Left ventricle myocardium inferior (tissue), 1 donor: ENCODE measurements at regions of chr18 and their contacts with region 1.

Region 1: DNA sequence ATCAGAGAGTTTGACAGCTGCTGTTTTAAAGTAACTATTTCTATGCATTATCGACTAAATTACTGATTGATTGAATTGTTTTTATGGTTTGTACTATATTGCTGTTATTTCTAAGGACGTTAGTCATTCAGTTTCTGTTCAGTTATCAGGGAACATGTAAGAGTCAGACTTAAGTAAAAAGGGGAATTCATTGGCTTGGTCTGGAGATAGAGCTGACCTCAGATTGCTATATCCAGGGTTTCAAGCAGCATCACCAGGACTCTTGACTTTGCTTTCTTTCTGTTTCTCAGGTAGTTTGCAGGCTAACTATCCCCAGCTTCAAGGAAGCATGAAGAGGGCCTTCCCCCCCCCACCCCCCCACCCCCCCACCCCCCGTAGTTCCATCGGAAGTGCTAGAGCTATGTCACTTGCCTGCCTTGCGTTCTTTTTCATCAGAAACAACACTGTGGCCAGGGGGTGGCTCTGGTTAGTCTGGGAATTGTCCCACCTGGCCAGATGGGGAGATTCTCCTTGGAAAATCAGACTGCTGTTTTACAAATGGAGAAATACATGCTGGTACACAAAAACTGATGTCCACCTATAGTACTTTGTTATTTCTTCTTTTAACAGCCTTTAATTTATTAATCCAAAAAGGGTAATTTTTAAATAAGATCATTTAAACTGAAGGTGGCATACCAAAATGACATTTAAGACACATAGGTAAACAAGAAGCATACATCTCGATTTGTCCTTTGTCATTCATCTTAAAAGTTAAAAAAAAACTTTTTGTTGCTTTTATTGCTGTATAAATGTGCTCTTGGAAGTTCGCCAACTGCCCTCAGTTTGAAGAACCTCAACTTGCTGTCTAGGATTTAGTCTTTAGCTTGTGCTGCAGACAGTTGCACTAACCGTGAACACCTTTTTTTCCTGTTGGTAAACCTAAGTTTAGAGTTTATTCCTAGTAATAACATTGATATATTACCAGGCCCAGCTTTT is 9.4 kb downstream of the SMAD4 start:
- DNase-seq: no peak
- H3K4me3 ChIP-seq: no peak overlapping the region
- H3K27ac ChIP-seq: no peak overlapping the region
- H3K4me1 ChIP-seq: peaks cover 100% of the 10 kb centered on the region
- H3K27me3 ChIP-seq: no peaks in the 10 kb centered on the region
- CTCF ChIP-seq: no peak

Region 2: DNA sequence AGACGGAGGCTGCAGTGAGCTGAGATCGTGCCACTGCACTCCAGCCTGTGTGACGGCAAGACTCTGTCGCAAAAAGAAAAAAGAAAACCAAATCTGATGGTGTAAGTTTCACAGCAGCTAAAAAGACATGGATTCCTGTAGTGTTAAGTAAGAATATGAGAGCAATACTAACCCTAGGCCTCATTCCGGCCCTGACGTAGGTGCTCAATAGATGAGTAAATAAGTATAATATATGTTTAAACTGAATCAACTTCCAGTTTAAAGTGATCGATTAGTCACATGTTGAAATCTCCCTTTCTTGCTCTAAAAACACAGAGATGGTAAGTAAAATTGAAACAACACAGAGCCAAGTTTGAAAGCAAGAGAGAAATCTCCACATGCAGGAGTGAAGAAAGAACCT is 152.5 kb before region 1 on chr18:
- intact Hi-C with region 1: no loop called
- DNase-seq: no peak
- H3K4me3 ChIP-seq: no peak overlapping the region
- H3K27ac ChIP-seq: no peak overlapping the region
- H3K4me1 ChIP-seq: no peaks in the 10 kb centered on the region
- H3K27me3 ChIP-seq: no peaks in the 10 kb centered on the region
- CTCF ChIP-seq: no peak

Region 3: GRCh38 chr18:51110073-51110803 is 70.8 kb after region 1 on chr18:
- intact Hi-C with region 1: no loop called
- DNase-seq: peak; percentile 57
- H3K4me3 ChIP-seq: peak overlapping the region; percentile 37
- H3K27ac ChIP-seq: no peak overlapping the region
- H3K4me1 ChIP-seq: peaks cover 3% of the 10 kb centered on the region
- H3K27me3 ChIP-seq: no peaks in the 10 kb centered on the region
- CTCF ChIP-seq: peak; percentile 99

Region 4: DNA sequence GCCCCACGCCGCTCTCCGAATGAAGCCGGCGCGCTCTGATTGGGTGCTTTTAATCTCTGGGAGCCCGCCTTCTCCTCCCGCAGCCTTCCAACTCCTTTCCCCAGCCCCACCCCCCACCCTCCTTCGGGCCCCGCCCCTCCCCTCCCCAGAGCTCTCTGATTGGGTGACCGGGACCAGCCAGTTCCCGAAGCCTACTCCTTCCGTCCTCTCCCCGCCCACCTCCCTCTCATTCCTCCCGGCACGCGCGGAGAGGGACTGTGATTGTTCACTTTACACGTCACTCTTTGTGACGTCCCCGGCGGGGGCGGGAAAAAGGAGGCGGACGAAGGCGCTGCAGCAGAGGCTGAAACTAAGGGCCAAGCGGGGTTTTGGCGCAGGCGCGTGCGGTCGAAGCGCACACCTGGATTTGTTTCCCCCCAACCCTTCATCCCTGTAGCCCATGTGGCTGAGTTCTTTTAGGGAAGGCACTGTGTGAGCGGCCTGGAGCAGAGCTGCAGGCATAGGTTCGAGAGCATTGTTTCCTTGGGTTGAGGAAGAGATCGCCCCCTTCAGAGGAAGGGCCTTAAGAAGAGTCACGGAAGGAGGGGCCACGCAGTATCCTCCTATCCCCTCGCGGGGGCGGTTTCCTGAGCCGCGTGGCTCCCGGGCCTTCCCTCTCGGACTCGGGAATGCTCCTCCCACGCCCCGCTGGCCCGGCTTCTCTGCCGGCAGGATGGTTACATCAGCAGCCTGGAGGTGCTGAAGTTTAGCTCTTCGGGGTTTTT is 158.4 kb after region 1 on chr18 and contains the start of gene MEX3C:
- intact Hi-C with region 1: loop called (anchors 10 kb)
- DNase-seq: peak; percentile 99
- H3K4me3 ChIP-seq: peak within 1 kb of the TSS; percentile 94
- H3K27ac ChIP-seq: peak within 1 kb of the TSS; percentile 96
- H3K4me1 ChIP-seq: peaks cover 39% of the 10 kb centered on the region
- H3K27me3 ChIP-seq: no peaks in the 10 kb centered on the region
- CTCF ChIP-seq: peak; percentile 56
- total RNA-seq, gene MEX3C: 17.2 TPM